Transverse colon (tissue), 4 donors: ENCODE measurements at regions of chr1 and their contacts with region 1.

Region 1: GRCh38 chr1:31182352-31182751 is 57.3 kb downstream of the NKAIN1 start:
- DNase-seq: peak; percentile 64
- H3K4me3 ChIP-seq: peak overlapping the region in 2 of 4 donors; percentile 11 to 20
- H3K27ac ChIP-seq: no peak overlapping the region
- H3K4me1 ChIP-seq: peaks cover 5 to 14% (median 12%) of the 10 kb centered on the region in 4 donors
- H3K27me3 ChIP-seq: peaks cover 47% of the 10 kb centered on the region
- CTCF ChIP-seq: no peak
- EP300 ChIP-seq: no peak
- POLR2A ChIP-seq: no peak

Region 2: GRCh38 chr1:31335007-31335406 is 152.7 kb after region 1 on chr1:
- in situ Hi-C with region 1: loop called in 3 of 4 experiments (anchors 10 to 25 kb)
- intact Hi-C with region 1: no loop called
- DNase-seq: no peak
- H3K4me3 ChIP-seq: no peak overlapping the region
- H3K27ac ChIP-seq: no peak overlapping the region
- H3K4me1 ChIP-seq: no peaks in the 10 kb centered on the region
- H3K27me3 ChIP-seq: no peaks in the 10 kb centered on the region
- CTCF ChIP-seq: peak; percentile 42 to 56 (median 51)
- EP300 ChIP-seq: no peak
- POLR2A ChIP-seq: no peak

Region 3: DNA sequence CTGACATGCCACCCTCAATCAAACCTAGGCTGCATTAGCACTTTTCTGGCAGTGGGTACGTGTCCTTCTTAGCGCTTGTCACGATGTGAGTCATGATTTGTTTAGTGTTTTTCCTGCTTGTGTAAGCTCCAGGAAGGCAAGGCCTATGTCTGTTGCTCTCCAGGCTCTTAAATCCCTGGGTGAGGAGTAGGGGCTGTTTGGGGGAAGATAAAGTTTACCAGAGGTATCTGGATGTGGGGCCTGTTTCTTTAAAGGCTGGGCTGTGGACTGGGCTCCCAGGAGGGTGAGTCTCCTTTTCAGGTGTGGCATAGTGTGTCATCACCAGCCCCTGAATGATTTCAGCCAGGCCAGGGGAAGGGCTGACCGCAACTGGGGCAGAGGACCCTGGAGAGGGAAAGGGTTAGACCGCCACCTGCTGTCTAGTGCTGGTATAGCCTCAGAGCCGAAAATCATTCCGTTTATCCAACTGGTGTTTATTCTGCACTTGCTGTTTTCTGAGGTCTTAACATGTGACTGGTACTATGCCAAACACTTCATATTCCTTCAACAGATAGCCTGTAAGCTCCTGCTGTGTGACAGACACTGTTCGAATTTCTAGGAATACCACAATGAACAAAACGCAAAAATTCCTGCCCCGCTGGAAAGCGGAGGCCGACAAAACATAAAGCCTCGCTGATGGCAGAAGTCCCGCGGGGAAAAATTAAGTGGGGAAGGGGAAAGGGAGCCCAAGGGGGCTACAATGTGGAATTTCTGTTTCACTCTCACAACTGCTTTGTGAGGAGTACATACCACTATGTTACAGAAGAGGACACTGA is 240.4 kb after region 1 on chr1:
- in situ Hi-C with region 1: loop called in 3 of 4 experiments (anchors 10 kb)
- intact Hi-C with region 1: loop called (anchors 10 kb)
- DNase-seq: peak; percentile 86
- H3K4me3 ChIP-seq: no peak overlapping the region
- H3K27ac ChIP-seq: peak overlapping the region; percentile 64 to 73 (median 68)
- H3K4me1 ChIP-seq: peaks cover 0 to 40% (median 9%) of the 10 kb centered on the region in 4 donors
- H3K27me3 ChIP-seq: no peaks in the 10 kb centered on the region
- CTCF ChIP-seq: peak; percentile 92 to 96 (median 96)
- EP300 ChIP-seq: no peak
- POLR2A ChIP-seq: peak; percentile 11